ENCODE measurements at regions of chr6 and their contacts with region 1.

Region 1: GRCh38 chr6:85537055-85537494 is 56.6 kb downstream of the SNX14 start:
- DNase-seq: peak; percentile 9 to 21 (median 14)
- H3K4me3 ChIP-seq: no peak overlapping the region
- H3K27ac ChIP-seq: no peak overlapping the region
- H3K4me1 ChIP-seq: no peaks in the 10 kb centered on the region
- H3K27me3 ChIP-seq: no peaks in the 10 kb centered on the region

Region 2: GRCh38 chr6:85354761-85355618 is 182.1 kb before region 1 on chr6:
- CTCF ChIA-PET with region 1: interaction called, 10 read pairs
- POLR2A ChIA-PET with region 1: no interaction called
- DNase-seq: peak; percentile 56 to 72 (median 71)
- H3K4me3 ChIP-seq: no peak overlapping the region
- H3K27ac ChIP-seq: no peak overlapping the region
- H3K4me1 ChIP-seq: no peaks in the 10 kb centered on the region
- H3K27me3 ChIP-seq: peaks cover 0 to 4% (median 0%) of the 10 kb centered on the region in 5 experiments

Region 3: GRCh38 chr6:85429346-85429745 is 107.7 kb before region 1 on chr6:
- CTCF ChIA-PET with region 1: no interaction called
- POLR2A ChIA-PET with region 1: no interaction called
- DNase-seq: no peak
- H3K4me3 ChIP-seq: no peak overlapping the region
- H3K27ac ChIP-seq: no peak overlapping the region
- H3K4me1 ChIP-seq: no peaks in the 10 kb centered on the region
- H3K27me3 ChIP-seq: no peaks in the 10 kb centered on the region

Region 4: GRCh38 chr6:85612690-85613474 is 75.8 kb after region 1 on chr6:
- CTCF ChIA-PET with region 1: no interaction called
- POLR2A ChIA-PET with region 1: no interaction called
- DNase-seq: no peak
- H3K4me3 ChIP-seq: no peak overlapping the region
- H3K27ac ChIP-seq: no peak overlapping the region
- H3K4me1 ChIP-seq: no peaks in the 10 kb centered on the region
- H3K27me3 ChIP-seq: no peaks in the 10 kb centered on the region